Activated CD4-positive, alpha-beta T cell treated with anti-CD3 and anti-CD28 coated beads for 36 hours (primary cell): ENCODE measurements at regions of chr16 and their contacts with region 1.

Region 1: DNA sequence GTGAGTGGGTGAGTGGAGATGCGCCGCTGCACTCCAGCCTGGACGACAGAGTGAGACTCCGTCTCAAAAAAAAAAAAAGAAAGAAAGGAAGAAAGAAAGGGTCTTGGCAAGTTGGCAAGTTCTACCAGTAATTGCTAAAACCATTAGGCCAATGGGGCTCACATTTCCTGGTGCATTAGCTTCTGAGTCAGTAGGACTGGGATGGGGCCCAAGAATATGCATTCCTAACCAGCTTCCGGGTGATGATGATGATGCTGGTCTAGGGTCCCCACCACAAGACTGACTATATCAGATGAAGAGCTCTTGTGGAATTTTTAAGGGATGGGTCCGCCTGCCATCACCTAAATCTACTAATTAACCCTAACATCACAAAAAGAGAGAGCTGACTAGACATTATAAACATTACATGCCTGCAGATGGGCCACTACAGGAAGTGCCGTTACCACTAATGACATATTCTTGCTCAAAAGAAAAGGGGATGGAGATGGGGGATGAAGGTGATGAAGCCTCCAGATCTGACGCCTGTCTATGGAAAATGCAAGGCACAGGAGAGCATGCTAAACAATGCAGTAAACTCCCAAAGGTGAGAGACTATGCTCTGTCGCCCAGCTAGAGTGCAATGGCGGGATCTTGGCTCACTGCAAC is 13.1 kb downstream of the MYH11 start:
- DNase-seq: no peak
- ATAC-seq: no peak
- H3K4me3 Mint-ChIP-seq: no peak overlapping the region
- H3K27ac Mint-ChIP-seq: no peak overlapping the region
- H3K4me1 Mint-ChIP-seq: no peaks in the 10 kb centered on the region
- H3K27me3 Mint-ChIP-seq: peaks cover 2% of the 10 kb centered on the region

Region 2: GRCh38 chr16:16805809-16806208 is 962.1 kb after region 1 on chr16:
- CTCF ChIA-PET with region 1: no interaction called
- POLR2A ChIA-PET with region 1: no interaction called
- intact Hi-C with region 1: loop called in 1 of 2 experiments (anchors 10 kb)
- DNase-seq: no peak
- ATAC-seq: no peak
- H3K4me3 Mint-ChIP-seq: no peak overlapping the region
- H3K27ac Mint-ChIP-seq: no peak overlapping the region
- H3K4me1 Mint-ChIP-seq: no peaks in the 10 kb centered on the region
- H3K27me3 Mint-ChIP-seq: peaks cover 13% of the 10 kb centered on the region